Activated CD4-positive, alpha-beta T cell treated with anti-CD3 and anti-CD28 coated beads for 36 hours (primary cell): ENCODE measurements at regions of chr12 and their contacts with region 1.

Region 1: GRCh38 chr12:19129486-19130223 is at the start of gene PLEKHA5:
- DNase-seq: peak; percentile 70
- ATAC-seq: peak; percentile 69
- H3K4me3 Mint-ChIP-seq: peak within 1 kb of the TSS; percentile 85
- H3K27ac Mint-ChIP-seq: peak within 1 kb of the TSS; percentile 34
- H3K4me1 Mint-ChIP-seq: peaks cover 18% of the 10 kb centered on the region
- H3K27me3 Mint-ChIP-seq: peaks cover 15% of the 10 kb centered on the region
- total RNA-seq, gene PLEKHA5: 4.5 to 5.7 TPM

Region 2: GRCh38 chr12:19439059-19440018 is 309.7 kb after region 1 on chr12 and contains the start of gene AEBP2:
- CTCF ChIA-PET with region 1: no interaction called
- POLR2A ChIA-PET with region 1: no interaction called
- intact Hi-C with region 1: loop called in 1 of 2 experiments (anchors 10 kb)
- DNase-seq: peak; percentile 93
- ATAC-seq: peak; percentile 84
- H3K4me3 Mint-ChIP-seq: peak within 1 kb of the TSS; percentile 98
- H3K27ac Mint-ChIP-seq: peak within 1 kb of the TSS; percentile 98
- H3K4me1 Mint-ChIP-seq: peaks cover 36% of the 10 kb centered on the region
- H3K27me3 Mint-ChIP-seq: no peaks in the 10 kb centered on the region
- total RNA-seq, gene AEBP2: 44.2 to 52.9 TPM